Sigmoid colon (tissue), 7 donors: ENCODE measurements at regions of chr21 and their contacts with region 1.

Region 1: DNA sequence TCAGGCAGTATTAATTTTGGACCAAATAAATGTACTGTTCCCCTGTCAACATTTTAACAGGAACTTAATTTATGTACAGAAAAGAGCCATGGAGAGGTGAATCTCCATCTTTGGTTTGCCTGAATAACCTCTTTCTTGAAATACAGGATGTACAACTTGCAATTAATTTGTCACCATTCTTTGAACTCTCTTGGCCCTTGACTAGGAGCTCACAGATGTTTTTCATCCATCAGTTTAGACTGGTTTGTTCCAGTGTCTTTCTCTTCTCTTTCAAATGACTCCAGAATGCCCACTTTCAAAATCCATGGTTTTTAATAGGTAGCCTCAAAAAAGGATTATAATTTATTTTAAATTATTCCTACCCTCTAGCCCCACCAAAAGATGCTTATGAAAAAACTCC is 5.0 kb downstream of the MAP3K7CL start:
- DNase-seq: no peak
- H3K4me3 ChIP-seq: no peak overlapping the region
- H3K27ac ChIP-seq: no peak overlapping the region
- H3K4me1 ChIP-seq: peaks cover 0 to 12% (median 7%) of the 10 kb centered on the region in 4 donors
- H3K27me3 ChIP-seq: no peaks in the 10 kb centered on the region
- CTCF ChIP-seq: no peak
- EP300 ChIP-seq: no peak
- POLR2A ChIP-seq: no peak

Region 2: DNA sequence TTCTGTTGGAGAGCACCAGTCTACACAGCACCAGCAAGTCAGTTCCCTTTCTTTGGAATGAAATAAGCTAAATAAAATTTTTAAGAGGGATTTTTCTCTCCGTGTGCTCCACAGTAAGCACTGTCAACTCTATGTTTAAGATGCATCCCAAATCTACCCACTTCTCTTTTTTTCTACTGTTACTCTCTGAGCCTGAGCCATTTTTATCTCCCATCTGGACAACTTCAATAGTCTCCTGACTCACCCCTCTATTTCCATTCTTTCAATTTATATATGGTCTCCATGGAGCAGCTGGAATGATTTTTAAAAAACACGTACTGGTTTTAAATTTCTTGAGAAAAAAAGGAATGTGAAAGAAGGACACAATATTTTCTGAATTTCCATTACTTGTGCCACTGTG is 37.3 kb before region 1 on chr21:
- intact Hi-C with region 1: loop called (anchors 5 kb)
- DNase-seq: no peak
- H3K4me3 ChIP-seq: no peak overlapping the region
- H3K27ac ChIP-seq: peak overlapping the region in 3 of 4 donors; percentile 32 to 44 (median 39)
- H3K4me1 ChIP-seq: peaks cover 0 to 21% (median 13%) of the 10 kb centered on the region in 4 donors
- H3K27me3 ChIP-seq: no peaks in the 10 kb centered on the region
- CTCF ChIP-seq: no peak
- EP300 ChIP-seq: no peak
- POLR2A ChIP-seq: no peak